ENCODE measurements at regions of chr18 and their contacts with region 1.

Region 1: DNA sequence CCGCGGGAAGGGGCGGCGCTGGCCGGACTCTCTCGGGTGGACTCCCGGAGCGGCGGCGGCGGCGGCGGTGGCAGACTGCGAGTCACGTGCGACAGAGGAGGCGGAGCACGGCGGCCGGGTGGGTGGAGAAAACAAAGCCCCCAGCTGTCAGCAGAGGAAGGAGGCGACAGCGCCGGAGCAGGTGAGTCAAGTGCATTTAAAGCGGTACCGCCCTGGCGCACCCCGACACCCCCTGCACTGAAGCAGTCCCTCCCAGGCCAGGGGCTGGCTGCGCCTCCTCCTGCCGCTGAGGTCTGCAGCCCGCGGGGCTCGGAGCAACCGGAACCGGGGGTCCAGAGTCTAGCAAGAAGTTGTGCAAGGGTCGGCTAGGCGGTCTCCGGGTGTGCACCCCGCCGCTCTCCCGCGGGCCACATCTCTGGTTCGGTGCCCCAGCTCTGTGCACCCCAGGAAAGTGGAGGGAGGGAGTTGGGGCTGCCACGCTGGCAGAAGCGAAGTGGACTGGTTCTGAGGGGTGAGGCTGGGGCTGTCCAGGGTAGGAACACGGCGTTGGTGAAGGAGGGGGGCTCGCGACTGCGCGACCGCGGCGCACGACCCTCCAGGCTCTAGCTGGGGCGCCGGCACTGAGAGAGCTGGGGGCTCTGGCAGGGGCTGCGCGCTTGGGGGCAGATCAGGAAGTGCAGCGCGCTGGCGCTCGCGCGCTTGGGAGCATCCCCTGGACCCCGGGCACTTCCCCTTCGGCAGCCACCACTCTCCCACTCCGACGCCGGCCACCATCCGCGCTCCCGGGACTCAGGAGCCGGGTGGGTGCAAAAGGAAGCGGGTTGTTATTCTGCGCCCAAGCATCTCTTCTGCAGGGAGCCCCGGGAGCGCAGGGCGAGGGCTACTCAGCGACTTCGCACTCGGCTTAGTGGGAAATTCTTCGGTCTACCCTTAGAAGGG is 64.0 kb upstream of the MAPRE2 start:
- DNase-seq: peak; percentile 90
- H3K4me3 Mint-ChIP-seq: peak overlapping the region; percentile 82
- H3K27ac Mint-ChIP-seq: no peak overlapping the region
- H3K4me1 Mint-ChIP-seq: peaks cover 23% of the 10 kb centered on the region
- H3K27me3 Mint-ChIP-seq: peaks cover 39% of the 10 kb centered on the region

Region 2: DNA sequence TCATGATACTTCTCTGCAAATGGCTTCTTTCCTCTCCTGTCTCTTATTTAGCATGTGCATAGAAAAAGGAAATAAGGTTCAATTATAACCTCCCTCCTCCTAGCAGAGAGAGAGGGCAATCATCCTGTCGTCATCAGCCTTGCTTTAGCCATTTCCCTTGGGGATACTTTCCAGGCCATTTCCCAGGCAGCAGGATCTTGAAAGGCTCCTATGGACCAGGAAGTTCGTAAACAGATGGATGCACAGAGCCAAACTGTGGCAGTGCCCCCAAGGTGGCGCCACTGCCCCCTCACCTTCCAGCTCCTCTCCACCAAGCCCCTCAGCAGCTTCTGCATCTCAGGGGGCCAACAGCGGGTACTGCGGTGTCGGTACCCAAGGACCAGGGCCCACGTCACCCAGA is 109.6 kb before region 1 on chr18:
- intact Hi-C with region 1: loop called (anchors 1 kb)
- DNase-seq: no peak
- H3K4me3 Mint-ChIP-seq: no peak overlapping the region
- H3K27ac Mint-ChIP-seq: peak overlapping the region; percentile 26
- H3K4me1 Mint-ChIP-seq: peaks cover 26% of the 10 kb centered on the region
- H3K27me3 Mint-ChIP-seq: peaks cover 6% of the 10 kb centered on the region

Region 3: GRCh38 chr18:35158728-35159450 is 181.7 kb after region 1 on chr18:
- intact Hi-C with region 1: loop called (anchors 1 kb)
- DNase-seq: peak; percentile 77
- H3K4me3 Mint-ChIP-seq: peak overlapping the region; percentile 30
- H3K27ac Mint-ChIP-seq: peak overlapping the region; percentile 88
- H3K4me1 Mint-ChIP-seq: peaks cover 24% of the 10 kb centered on the region
- H3K27me3 Mint-ChIP-seq: no peaks in the 10 kb centered on the region

Region 4: GRCh38 chr18:35484034-35484433 is 506.9 kb after region 1 on chr18:
- intact Hi-C with region 1: loop called (anchors 5 kb)
- DNase-seq: no peak
- H3K4me3 Mint-ChIP-seq: no peak overlapping the region
- H3K27ac Mint-ChIP-seq: peak overlapping the region; percentile 16
- H3K4me1 Mint-ChIP-seq: peaks cover 16% of the 10 kb centered on the region
- H3K27me3 Mint-ChIP-seq: no peaks in the 10 kb centered on the region

Measured in activated CD4-positive, alpha-beta T cell treated with anti-CD3 and anti-CD28 coated beads, Interleukin-2, amount 10 ng/mL, durations not matched to agents 24 days and 14 days (primary cell).